HepG2 (cell line): ENCODE measurements at regions of chr14 and their contacts with region 1.

Region 1: DNA sequence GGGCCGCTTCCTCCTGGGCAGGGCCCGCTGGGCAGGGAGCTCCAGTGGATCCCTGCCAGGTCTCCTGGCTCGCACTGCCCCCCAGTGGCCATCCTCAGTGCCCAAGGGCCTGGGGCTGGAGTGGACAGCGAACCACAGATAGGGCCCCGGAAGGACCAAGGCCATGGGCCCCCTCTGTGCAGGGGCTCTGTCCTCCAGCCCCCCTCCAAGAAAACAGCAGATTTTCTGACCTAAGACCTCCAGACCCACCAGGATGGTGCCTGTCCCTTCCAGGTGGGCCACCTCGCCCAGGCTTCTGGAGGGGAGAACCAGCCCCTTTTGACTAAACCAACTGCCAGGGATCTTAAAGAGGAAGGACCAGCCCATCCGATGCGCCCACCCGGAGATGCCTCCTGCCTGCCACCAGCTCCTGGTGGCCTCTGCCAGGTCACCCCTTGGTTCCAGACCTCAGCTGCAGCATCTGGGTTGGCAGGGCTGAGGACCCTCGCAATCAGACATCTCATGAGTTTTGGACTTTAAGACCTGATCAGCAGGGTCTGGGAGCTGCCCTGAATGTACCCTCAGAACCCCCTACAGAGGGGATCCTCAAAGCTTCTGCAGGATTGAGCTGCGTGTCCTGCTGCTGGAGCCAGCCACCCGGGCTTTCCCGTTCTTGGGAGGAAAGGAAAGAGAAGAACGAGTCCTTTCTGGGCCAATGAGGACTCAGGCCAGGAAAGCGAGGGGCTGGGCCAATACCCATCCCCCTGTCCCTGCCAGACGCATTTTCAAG is 325.8 kb upstream of the DIO3 start:
- DNase-seq: peak; percentile 47
- ATAC-seq: peak; percentile 91
- H3K4me3 ChIP-seq: peak overlapping the region in 1 of 3 experiments; percentile 15; a peak in 1 of 6 replicates
- H3K27ac ChIP-seq: no peak overlapping the region
- H3K4me1 ChIP-seq: peaks cover 77% of the 10 kb centered on the region
- H3K27me3 ChIP-seq: peaks cover 0 to 10% of the 10 kb centered on the region in 2 experiments; a peak in 2 of 5 replicates
- CTCF ChIP-seq: peak; percentile 97
- EP300 ChIP-seq: no peak
- POLR2A ChIP-seq: no peak
- RAD21 ChIP-seq: peak; percentile 96

Region 2: GRCh38 chr14:100906420-100906819 is 329.1 kb before region 1 on chr14:
- CTCF ChIA-PET with region 1: no interaction called
- POLR2A ChIA-PET with region 1: no interaction called
- in situ Hi-C with region 1: loop called (anchors 10 kb)
- intact Hi-C with region 1: loop called (anchors 1 kb)
- DNase-seq: no peak
- ATAC-seq: 0 out of 3 replicates have a peak, but pooled peaks have one; percentile 11
- H3K4me3 ChIP-seq: no peak overlapping the region
- H3K27ac ChIP-seq: no peak overlapping the region
- H3K4me1 ChIP-seq: peaks cover 29% of the 10 kb centered on the region
- H3K27me3 ChIP-seq: peaks cover 0 to 61% of the 10 kb centered on the region in 2 experiments; a peak in 3 of 5 replicates
- CTCF ChIP-seq: peak; percentile 76
- EP300 ChIP-seq: no peak
- POLR2A ChIP-seq: no peak
- RAD21 ChIP-seq: no peak; the same call in 1 of the 2 replicates

Region 3: GRCh38 chr14:101183376-101184103 is 52.0 kb before region 1 on chr14:
- CTCF ChIA-PET with region 1: interaction called, 5 read pairs
- POLR2A ChIA-PET with region 1: no interaction called
- in situ Hi-C with region 1: loop called (anchors 5 kb)
- intact Hi-C with region 1: no loop called
- DNase-seq: peak; percentile 36
- ATAC-seq: peak; percentile 92
- H3K4me3 ChIP-seq: no peak overlapping the region
- H3K27ac ChIP-seq: no peak overlapping the region
- H3K4me1 ChIP-seq: no peaks in the 10 kb centered on the region
- H3K27me3 ChIP-seq: peaks cover 0 to 35% of the 10 kb centered on the region in 2 experiments; a peak in 3 of 5 replicates
- CTCF ChIP-seq: peak; percentile 93
- EP300 ChIP-seq: no peak
- POLR2A ChIP-seq: no peak
- RAD21 ChIP-seq: peak; percentile 91

Region 4: DNA sequence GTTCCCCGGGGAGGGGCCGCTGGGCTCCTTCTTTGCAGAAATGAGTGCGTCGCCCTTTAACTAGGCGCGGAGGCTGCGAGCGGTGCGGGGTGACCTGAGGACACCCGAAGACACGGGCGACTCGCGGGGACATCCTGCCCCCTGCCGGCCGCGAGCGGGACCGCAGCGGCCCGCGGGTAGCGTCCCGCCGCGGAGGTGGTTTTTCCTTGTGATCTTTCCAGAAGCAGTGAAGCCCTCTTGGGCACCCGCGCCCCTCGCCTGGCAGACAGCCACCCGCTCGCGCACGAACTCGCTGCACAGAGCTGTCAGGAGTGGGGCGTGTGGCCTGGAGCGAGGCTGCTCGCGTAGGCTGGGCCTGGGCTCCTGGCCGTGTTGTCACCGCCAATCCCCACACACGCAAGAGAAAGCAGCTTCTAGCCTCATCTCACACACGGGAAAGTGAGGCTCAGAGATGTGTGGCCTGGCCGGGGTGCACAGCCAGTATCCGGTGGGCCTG is 393.0 kb after region 1 on chr14:
- CTCF ChIA-PET with region 1: no interaction called
- POLR2A ChIA-PET with region 1: no interaction called
- in situ Hi-C with region 1: no loop called
- intact Hi-C with region 1: loop called (anchors 5 kb)
- DNase-seq: peak; percentile 25
- ATAC-seq: peak; percentile 84
- H3K4me3 ChIP-seq: peak overlapping the region in 2 of 3 experiments; percentile 34 to 59; a peak in 3 of 6 replicates
- H3K27ac ChIP-seq: no peak overlapping the region
- H3K4me1 ChIP-seq: peaks cover 15% of the 10 kb centered on the region
- H3K27me3 ChIP-seq: peaks cover 1 to 21% of the 10 kb centered on the region in 2 experiments; a peak in 3 of 5 replicates
- CTCF ChIP-seq: peak; percentile 96
- EP300 ChIP-seq: no peak
- POLR2A ChIP-seq: no peak
- RAD21 ChIP-seq: peak; percentile 97